Activated T-helper 1 cell treated with anti-CD3 and anti-CD28 coated beads, Interleukin-12 subunit alpha, Interleukin-12 subunit beta, Interleukin-2, Interleukin-4 antibody, amounts not matched to agents 30 ng/mL and 10 ng/mL and 1 ng/mL, durations not matched to agents 14 hours and 24 hours and 36 hours (primary cell): ENCODE measurements at regions of chr1 and their contacts with region 1.

Region 1: DNA sequence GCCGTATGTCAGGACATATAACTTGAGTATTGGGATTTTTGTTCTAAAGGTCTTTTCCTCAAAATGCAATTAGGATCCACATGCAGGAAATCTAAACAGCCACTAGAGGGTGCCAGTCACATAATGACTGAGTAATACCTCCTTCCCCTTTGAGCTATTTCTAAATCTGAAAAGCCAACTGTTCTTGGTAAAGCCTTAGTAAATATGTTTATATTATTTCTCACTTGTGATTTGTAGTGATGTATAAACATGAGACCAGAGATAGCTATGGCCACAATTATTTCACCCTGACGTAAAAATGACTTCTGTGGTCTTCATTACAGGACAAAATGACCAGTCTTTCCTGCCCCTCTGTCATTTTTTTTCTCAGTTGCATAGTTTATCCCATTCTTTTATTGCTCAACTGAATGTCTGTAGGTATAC is 41.0 kb upstream of the DR1 start:
- DNase-seq: peak; percentile 25
- H3K4me3 Mint-ChIP-seq: no peak overlapping the region
- H3K27ac Mint-ChIP-seq: no peak overlapping the region
- H3K4me1 Mint-ChIP-seq: peaks cover 5% of the 10 kb centered on the region
- H3K27me3 Mint-ChIP-seq: no peaks in the 10 kb centered on the region

Region 2: GRCh38 chr1:92749024-92749634 is 555.6 kb before region 1 on chr1:
- intact Hi-C with region 1: no loop called
- DNase-seq: peak; percentile 2
- H3K4me3 Mint-ChIP-seq: no peak overlapping the region
- H3K27ac Mint-ChIP-seq: no peak overlapping the region
- H3K4me1 Mint-ChIP-seq: no peaks in the 10 kb centered on the region
- H3K27me3 Mint-ChIP-seq: peaks cover 9% of the 10 kb centered on the region

Region 3: GRCh38 chr1:93021539-93022134 is 283.1 kb before region 1 on chr1:
- intact Hi-C with region 1: loop called (anchors 1 kb)
- DNase-seq: no peak
- H3K4me3 Mint-ChIP-seq: no peak overlapping the region
- H3K27ac Mint-ChIP-seq: no peak overlapping the region
- H3K4me1 Mint-ChIP-seq: peaks cover 6% of the 10 kb centered on the region
- H3K27me3 Mint-ChIP-seq: peaks cover 36% of the 10 kb centered on the region

Region 4: DNA sequence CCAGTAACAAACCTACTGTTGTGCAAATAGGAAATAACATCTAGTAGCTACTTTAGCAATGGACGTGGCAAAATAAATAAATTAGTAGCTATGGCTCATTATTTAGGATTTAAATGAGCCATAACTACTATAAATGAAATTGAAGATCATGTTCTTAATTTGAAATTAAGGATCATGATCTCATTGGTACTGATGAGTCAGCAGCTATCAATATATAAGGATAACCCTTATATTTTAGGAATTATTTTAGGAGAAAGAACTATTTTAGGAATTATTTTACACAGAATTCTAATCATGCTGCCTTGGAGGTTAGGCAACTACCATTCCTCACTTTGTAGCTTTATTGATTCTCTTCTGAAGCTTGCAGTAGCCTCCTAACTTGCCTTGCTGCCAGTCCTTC is 65.0 kb after region 1 on chr1:
- intact Hi-C with region 1: no loop called
- DNase-seq: no peak
- H3K4me3 Mint-ChIP-seq: no peak overlapping the region
- H3K27ac Mint-ChIP-seq: no peak overlapping the region
- H3K4me1 Mint-ChIP-seq: no peaks in the 10 kb centered on the region
- H3K27me3 Mint-ChIP-seq: no peaks in the 10 kb centered on the region

Region 5: DNA sequence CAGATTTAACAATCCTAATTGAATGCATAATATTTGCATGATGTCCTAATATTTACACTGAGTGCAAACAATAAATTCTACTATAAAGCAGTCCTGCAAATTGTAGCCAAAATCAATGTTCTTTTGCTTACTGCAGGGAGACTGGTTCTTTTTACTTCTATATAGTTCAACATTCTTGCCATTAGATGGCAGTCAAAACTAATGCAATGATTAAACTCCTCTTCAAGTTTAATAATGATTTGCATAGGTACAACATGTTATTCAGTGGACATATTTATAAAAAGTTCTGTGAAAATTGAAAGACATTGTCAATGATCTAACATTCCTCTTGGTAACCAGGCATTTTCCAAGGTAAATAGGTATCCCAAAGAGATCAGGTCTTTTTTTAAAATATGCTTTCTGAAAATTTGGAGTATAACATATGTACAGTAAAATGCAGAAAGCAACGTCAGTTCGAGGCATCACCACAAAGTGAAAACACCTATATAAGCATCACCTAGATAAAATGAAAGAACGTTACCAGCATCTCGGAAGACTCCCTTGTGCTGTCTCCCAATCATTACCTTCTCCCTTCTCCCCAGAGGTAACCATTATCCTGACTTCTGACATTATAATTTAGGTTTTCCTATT is 133.4 kb after region 1 on chr1:
- intact Hi-C with region 1: loop called (anchors 2 kb)
- DNase-seq: no peak
- H3K4me3 Mint-ChIP-seq: no peak overlapping the region
- H3K27ac Mint-ChIP-seq: no peak overlapping the region
- H3K4me1 Mint-ChIP-seq: no peaks in the 10 kb centered on the region
- H3K27me3 Mint-ChIP-seq: peaks cover 39% of the 10 kb centered on the region

Region 6: DNA sequence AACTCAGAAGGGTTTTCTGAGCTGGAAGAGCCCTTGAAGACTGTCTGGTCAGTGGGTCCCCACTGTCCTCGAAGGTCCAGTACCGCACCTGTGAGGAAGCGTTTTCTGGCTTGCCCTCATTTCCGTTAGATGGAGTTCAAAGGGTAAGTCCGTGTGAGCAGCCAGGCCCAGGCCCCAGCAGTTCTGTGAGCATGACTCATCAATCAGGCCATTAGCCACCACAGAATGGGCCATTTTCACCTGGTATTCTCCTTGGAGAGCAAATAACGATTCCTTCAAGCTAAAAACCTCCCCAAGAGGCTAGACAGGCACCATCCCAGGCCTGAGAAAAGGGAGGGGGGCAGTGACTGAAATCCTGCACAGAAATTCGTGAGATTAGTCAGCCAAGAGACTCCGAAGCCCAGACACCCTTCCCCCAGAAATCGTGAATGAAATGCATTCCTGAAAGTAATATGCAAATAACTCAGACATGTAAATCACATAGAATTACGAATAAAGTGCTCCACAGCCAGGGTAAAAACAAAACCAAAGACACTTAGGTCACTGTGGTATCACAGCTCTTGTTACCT is 310.9 kb after region 1 on chr1:
- intact Hi-C with region 1: loop called (anchors 2 kb)
- DNase-seq: no peak
- H3K4me3 Mint-ChIP-seq: peak overlapping the region; percentile 25
- H3K27ac Mint-ChIP-seq: peak overlapping the region; percentile 72
- H3K4me1 Mint-ChIP-seq: peaks cover 22% of the 10 kb centered on the region
- H3K27me3 Mint-ChIP-seq: peaks cover 39% of the 10 kb centered on the region

Region 7: GRCh38 chr1:93629099-93630059 is 324.7 kb after region 1 on chr1:
- intact Hi-C with region 1: loop called (anchors 1 kb)
- DNase-seq: peak; percentile 24
- H3K4me3 Mint-ChIP-seq: no peak overlapping the region
- H3K27ac Mint-ChIP-seq: no peak overlapping the region
- H3K4me1 Mint-ChIP-seq: no peaks in the 10 kb centered on the region
- H3K27me3 Mint-ChIP-seq: peaks cover 7% of the 10 kb centered on the region

Region 8: GRCh38 chr1:93814059-93814794 is 509.5 kb after region 1 on chr1:
- intact Hi-C with region 1: loop called (anchors 2 kb)
- DNase-seq: peak; percentile 31
- H3K4me3 Mint-ChIP-seq: no peak overlapping the region
- H3K27ac Mint-ChIP-seq: no peak overlapping the region
- H3K4me1 Mint-ChIP-seq: peaks cover 15% of the 10 kb centered on the region
- H3K27me3 Mint-ChIP-seq: no peaks in the 10 kb centered on the region